HCT116 (cell line): ENCODE measurements at regions of chr1 and their contacts with region 1.

Region 1: GRCh38 chr1:16187748-16188401 is 24.6 kb downstream of the ARHGEF19 start:
- DNase-seq: no peak
- ATAC-seq: peak; percentile 81
- H3K4me3 ChIP-seq: peak overlapping the region in 1 of 2 experiments; percentile 48; a peak in 1 of 4 replicates
- H3K27ac ChIP-seq: no peak overlapping the region; the same call in 1 of the 2 replicates
- H3K4me1 ChIP-seq: peaks cover 47 to 63% of the 10 kb centered on the region in 2 experiments
- H3K27me3 ChIP-seq: no peaks in the 10 kb centered on the region
- CTCF ChIP-seq: peak in 2 of 3 experiments; percentile 94 to 99; a peak in 4 of 6 replicates
- POLR2A ChIP-seq: no peak
- RAD21 ChIP-seq: no peak

Region 2: GRCh38 chr1:16009030-16009709 is 178.7 kb before region 1 on chr1:
- CTCF ChIA-PET with region 1: no interaction called
- POLR2A ChIA-PET with region 1: no interaction called
- RAD21 ChIA-PET with region 1: no interaction called
- intact Hi-C with region 1: loop called (anchors 10 kb)
- DNase-seq: peak; percentile 64
- ATAC-seq: peak; percentile 73
- H3K4me3 ChIP-seq: no peak overlapping the region
- H3K27ac ChIP-seq: no peak overlapping the region
- H3K4me1 ChIP-seq: peaks cover 10 to 28% of the 10 kb centered on the region in 2 experiments
- H3K27me3 ChIP-seq: no peaks in the 10 kb centered on the region
- CTCF ChIP-seq: peak; percentile 95 to 99 (median 95)
- POLR2A ChIP-seq: no peak
- RAD21 ChIP-seq: peak; percentile 99

Region 3: DNA sequence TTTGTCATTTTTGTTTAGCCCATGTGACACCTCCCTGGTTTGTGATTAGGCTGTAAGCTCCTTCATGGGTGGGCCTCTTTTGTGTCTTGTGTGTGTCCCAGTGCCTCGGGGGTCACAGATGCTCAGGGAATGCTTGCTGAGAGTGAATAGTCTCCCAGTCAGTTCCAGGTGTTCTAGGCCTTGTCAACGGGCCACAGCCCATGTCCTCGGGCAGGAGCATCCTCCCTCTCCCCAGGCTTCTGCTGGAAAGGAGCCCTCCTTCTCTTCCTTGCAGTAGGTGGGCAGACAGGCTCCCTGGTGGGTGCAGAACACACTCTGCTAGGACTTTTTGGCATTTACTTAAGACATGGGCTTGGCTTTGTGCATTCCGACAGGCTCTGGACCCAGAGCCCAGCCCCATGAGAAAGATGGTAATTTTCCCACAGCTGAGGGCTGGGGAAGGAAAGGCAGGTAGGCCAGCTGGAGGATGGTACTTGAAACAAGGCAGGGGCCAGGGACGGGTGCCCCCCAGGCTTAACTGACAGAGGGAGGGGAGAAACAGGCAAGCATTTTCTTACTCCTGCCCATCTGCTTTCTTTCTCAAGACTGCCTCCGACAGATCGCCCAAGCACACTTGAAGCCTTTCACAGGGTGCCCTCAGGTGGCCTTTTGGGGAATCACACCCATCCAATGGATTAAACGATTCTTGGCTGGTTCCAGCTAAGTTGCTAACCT is 56.2 kb after region 1 on chr1:
- CTCF ChIA-PET with region 1: interaction called, 5 read pairs
- POLR2A ChIA-PET with region 1: no interaction called
- RAD21 ChIA-PET with region 1: interaction called in 1 of 2 experiments, 4 read pairs
- intact Hi-C with region 1: loop called (anchors 5 kb)
- DNase-seq: peak; percentile 65
- ATAC-seq: peak; percentile 85
- H3K4me3 ChIP-seq: no peak overlapping the region
- H3K27ac ChIP-seq: no peak overlapping the region
- H3K4me1 ChIP-seq: peaks cover 5 to 11% of the 10 kb centered on the region in 2 experiments
- H3K27me3 ChIP-seq: no peaks in the 10 kb centered on the region
- CTCF ChIP-seq: peak; percentile 85 to 92 (median 89)
- POLR2A ChIP-seq: no peak
- RAD21 ChIP-seq: peak; percentile 98

Region 4: DNA sequence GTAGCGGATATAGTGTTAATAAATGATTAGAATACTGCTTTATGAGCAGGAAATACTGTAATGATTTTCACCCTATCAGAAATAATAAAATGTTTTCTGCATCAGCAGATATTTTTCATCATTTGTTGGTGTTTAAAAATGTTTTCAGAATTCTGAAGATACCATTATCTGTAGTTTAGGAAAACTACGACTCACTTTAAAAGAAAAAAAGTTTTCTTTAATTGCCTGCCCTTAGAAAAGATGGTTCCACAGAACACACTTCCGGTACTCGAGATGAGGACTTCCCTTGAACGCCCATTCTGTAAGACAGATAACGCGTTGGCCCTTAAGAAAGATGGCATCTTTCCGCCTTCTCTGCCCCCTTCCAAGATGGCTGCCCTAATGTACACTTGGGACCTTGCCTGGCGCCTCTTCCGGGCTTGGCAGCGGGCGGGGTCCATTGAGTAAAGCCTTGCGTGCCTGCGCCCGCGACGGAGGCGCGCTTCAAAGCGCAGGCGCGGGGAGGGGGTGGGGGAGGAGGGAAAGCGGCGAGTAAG is 178.9 kb after region 1 on chr1 and contains the start of gene SZRD1:
- CTCF ChIA-PET with region 1: interaction called, 5 read pairs
- POLR2A ChIA-PET with region 1: no interaction called
- RAD21 ChIA-PET with region 1: no interaction called
- intact Hi-C with region 1: loop called (anchors 2 kb)
- DNase-seq: peak; percentile 98
- ATAC-seq: peak; percentile 88
- H3K4me3 ChIP-seq: peak within 1 kb of the TSS; percentile 61 to 96
- H3K27ac ChIP-seq: peak within 1 kb of the TSS; percentile 92
- H3K4me1 ChIP-seq: peaks cover 4 to 35% of the 10 kb centered on the region in 2 experiments; a peak in 3 of 4 replicates
- H3K27me3 ChIP-seq: no peaks in the 10 kb centered on the region
- CTCF ChIP-seq: no peak
- POLR2A ChIP-seq: no peak
- RAD21 ChIP-seq: no peak
- total RNA-seq, gene SZRD1: 141 TPM